Natural killer cell (primary cell): ENCODE measurements at regions of chr2 and their contacts with region 1.

Region 1: DNA sequence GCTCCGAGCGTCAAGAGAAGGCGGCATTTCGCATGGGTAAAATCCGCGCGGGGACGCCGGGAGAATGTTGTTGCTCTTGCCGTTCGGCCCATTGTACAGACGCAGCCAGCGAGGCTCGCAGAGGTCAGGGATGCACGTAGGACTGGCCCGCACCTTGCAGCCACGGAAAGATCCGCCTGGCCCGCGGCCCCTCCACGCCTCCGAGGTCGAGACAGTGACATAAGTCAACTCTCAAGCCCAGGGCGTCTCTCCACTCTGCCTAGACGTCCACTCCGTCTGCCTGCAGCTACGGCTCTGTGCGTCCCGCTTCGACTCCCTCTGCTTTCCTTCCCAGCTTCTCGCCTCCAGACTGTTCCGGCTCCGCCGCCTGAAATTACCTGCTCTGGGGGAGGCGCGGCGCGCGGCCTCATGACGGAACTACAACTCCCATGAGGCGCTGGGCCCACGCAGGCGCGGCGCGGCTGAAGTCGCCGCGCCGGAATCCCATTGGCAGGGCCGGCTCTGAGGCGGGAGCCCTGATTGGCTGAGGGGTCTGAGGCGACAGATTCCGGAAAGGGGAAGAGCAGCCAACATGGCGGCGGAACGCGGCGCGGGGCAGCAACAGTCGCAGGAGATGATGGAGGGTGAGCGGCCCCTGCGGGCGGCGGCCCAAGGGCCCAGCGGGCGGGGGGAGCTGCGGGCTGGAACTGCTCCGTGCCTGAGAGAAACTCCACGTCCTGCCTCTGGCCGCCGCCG is at the start of gene PPP1R7:
- DNase-seq: peak; percentile 89 to 97
- ATAC-seq: peak; percentile 83 to 89 (median 83)
- H3K4me3 ChIP-seq: peak within 1 kb of the TSS; percentile 78
- H3K4me3 Mint-ChIP-seq: peak within 1 kb of the TSS; percentile 95
- H3K27ac ChIP-seq: peak within 1 kb of the TSS; percentile 6
- H3K27ac Mint-ChIP-seq: peak within 1 kb of the TSS; percentile 89 to 90
- H3K4me1 ChIP-seq: peaks cover 14% of the 10 kb centered on the region
- H3K4me1 Mint-ChIP-seq: peaks cover 34 to 42% of the 10 kb centered on the region in 2 donors
- H3K27me3 ChIP-seq: no peaks in the 10 kb centered on the region
- H3K27me3 Mint-ChIP-seq: no peaks in the 10 kb centered on the region
- CTCF ChIP-seq: no peak
- total RNA-seq, gene PPP1R7: 57.8 to 66.3 (median 60.4) TPM

Region 2: DNA sequence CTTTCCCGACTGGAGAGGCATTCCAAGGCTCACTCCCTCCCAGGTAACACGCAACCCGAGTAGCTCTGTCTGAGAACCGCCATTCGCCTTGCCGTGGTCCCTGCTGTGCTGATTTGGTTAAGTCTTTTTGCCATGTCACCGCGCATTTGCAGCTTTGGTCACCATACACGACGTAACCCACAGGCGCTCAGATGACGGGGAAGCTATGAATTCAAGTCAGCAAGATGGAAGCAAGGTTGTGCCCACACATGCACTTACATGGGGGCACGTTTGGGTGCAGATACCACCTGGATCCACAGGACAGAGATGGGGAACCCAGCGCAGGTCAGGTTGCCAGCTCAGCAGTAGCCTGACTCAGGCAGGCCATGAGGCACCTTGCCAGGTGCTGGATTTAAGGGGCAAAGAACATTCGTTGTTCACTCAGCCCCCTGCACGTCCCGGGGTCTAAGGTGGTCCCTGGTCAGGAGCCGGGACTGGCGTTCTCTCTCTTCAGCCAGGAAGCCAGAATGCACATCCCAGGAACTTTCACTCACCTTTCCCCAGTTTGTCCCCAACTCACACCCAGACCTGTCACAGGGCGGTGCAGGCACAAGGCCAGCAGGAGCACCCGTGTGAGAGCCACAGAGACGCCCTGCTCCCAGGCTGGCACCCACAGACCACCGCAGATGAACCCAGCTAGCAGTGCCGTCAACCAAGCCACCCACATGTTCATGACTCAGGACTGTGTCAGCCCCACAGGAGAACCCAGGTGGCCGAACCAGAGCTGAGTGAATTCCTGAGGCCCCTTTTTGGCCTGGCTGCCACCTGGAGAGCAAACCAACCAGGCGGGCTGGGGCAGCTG is 131.8 kb before region 1 on chr2:
- intact Hi-C with region 1: no loop called
- DNase-seq: no peak
- ATAC-seq: no peak
- H3K4me3 ChIP-seq: no peak overlapping the region
- H3K4me3 Mint-ChIP-seq: no peak overlapping the region
- H3K27ac ChIP-seq: no peak overlapping the region
- H3K27ac Mint-ChIP-seq: no peak overlapping the region
- H3K4me1 ChIP-seq: no peaks in the 10 kb centered on the region
- H3K4me1 Mint-ChIP-seq: no peaks in the 10 kb centered on the region
- H3K27me3 ChIP-seq: no peaks in the 10 kb centered on the region
- H3K27me3 Mint-ChIP-seq: peaks cover 0 to 8% of the 10 kb centered on the region in 2 donors
- CTCF ChIP-seq: no peak

Region 3: DNA sequence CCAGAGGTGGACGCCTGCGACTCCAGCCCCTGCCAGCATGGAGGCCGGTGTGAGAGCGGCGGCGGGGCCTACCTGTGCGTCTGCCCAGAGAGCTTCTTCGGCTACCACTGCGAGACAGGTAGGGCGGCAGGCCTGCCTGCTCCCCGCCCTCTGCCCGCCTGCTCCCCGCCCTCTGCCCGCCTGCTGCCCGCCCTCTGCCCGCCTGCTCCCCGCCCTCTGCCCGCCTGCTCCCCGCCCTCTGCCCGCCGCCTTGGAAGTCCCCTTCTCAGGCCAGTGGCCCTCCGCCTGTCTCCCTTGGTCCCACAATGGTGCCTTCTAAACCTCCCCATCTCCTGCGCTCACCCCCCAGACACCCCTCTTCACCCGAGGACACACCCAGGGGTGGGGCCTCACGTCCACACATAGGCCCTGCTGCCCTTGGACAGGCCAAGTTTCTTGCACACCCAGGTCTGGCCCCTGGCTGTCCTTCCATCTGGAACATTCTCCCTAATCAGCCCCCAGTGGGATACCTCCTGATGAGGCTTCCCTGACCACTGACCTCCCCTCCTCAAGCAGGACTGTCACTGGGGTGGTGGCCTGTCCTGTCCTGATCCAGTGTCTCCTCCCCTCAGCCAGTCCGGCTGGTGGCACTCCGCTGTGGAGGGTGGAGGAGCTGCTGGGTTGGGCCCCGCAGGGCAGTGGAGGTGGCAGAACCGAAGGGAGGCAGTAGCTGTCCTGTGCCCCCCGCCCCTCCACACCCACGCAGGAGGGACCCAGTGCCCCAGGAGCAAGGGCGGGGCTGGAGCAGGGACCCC is 85.9 kb before region 1 on chr2:
- intact Hi-C with region 1: no loop called
- DNase-seq: peak in 1 of 2 donors; percentile 38
- ATAC-seq: peak in 2 of 3 donors; percentile 40 to 84
- H3K4me3 ChIP-seq: no peak overlapping the region
- H3K4me3 Mint-ChIP-seq: peak overlapping the region; percentile 66
- H3K27ac ChIP-seq: no peak overlapping the region
- H3K27ac Mint-ChIP-seq: no peak overlapping the region
- H3K4me1 ChIP-seq: peaks cover 6% of the 10 kb centered on the region
- H3K4me1 Mint-ChIP-seq: peaks cover 0 to 4% of the 10 kb centered on the region in 2 donors
- H3K27me3 ChIP-seq: no peaks in the 10 kb centered on the region
- H3K27me3 Mint-ChIP-seq: no peaks in the 10 kb centered on the region
- CTCF ChIP-seq: no peak

Region 4: DNA sequence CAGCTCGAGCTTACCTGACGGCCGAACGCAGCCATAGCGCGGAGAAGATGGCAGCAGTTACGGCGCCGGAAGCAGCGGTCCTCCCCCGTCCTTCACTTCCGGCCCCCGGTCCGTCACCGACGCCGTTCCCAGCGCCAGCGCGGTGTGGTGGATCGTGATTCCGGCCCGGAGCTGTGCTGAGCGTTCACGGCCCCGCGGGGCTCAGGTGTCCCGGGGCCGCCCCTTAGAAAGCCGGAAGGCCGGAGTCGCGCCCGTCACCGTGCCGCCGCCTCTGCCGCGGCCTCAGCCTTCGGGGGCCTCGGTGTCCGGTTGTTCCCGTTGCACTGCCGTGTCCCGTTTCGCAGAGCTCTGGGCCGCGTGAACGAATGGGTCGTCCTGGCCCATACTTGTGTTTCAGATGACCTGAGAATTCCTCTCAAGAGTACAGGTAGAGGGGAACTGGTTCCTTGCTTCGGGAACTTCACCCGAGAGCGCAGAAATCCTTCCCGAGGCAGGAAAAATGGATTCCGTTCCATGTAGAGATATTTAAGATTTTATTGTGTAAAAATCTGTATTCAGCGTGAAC is 47.8 kb before region 1 on chr2 and contains the start of gene MTERF4:
- intact Hi-C with region 1: loop called (anchors 1 kb)
- DNase-seq: peak; percentile 84 to 95
- ATAC-seq: peak; percentile 96 to 97 (median 96)
- H3K4me3 ChIP-seq: peak within 1 kb of the TSS; percentile 73
- H3K4me3 Mint-ChIP-seq: peak within 1 kb of the TSS; percentile 96
- H3K27ac ChIP-seq: peak within 1 kb of the TSS; percentile 85
- H3K27ac Mint-ChIP-seq: peak within 1 kb of the TSS; percentile 90 to 93
- H3K4me1 ChIP-seq: peaks cover 18% of the 10 kb centered on the region
- H3K4me1 Mint-ChIP-seq: peaks cover 17 to 42% of the 10 kb centered on the region in 2 donors
- H3K27me3 ChIP-seq: no peaks in the 10 kb centered on the region
- H3K27me3 Mint-ChIP-seq: no peaks in the 10 kb centered on the region
- CTCF ChIP-seq: no peak
- total RNA-seq, gene MTERF4: 38.9 to 45.5 (median 39.2) TPM

Region 5: DNA sequence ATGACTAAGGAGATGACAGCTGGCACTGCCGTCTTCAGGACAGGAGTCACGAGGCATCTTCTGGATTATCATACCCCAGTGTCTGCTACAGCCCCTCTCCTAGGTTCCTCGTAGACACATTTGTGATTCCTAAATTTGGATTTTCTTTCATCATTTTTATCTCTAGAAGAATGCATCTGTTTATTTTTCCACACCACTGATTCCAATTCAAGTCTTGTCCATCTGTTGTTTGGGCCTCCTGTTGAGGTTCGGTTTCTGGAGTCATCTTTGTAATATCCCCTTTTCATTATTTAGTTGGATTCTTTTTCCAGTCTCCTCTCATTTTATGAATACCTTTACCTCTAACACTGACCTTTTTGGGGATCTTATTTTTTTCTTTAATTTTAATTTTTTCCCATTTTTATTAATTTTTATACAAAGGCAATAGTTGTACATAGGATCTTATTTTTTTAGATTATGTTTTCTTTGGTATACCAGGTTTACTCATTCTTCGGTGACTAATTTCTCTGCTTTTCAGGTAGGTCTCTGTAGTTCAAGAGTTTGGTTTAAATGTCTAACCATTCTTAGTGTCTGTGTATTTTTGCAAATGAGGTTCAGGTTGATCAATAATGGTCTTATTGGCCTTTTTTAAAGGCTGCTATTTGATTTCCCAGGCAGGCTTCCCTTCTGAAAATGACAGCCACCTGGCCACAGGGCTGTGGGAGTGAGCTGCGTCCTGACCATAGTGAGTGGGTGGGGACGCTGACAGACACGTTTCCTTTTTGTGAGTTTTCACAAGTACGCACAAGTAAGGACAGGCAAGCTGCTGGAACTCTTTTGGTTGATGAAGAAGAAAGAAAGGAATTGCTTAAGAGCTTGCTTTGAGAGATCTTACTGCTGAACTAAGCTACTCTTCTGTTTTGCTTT is 240.5 kb after region 1 on chr2:
- intact Hi-C with region 1: no loop called
- DNase-seq: no peak
- ATAC-seq: no peak
- H3K4me3 ChIP-seq: no peak overlapping the region
- H3K4me3 Mint-ChIP-seq: no peak overlapping the region
- H3K27ac ChIP-seq: no peak overlapping the region
- H3K27ac Mint-ChIP-seq: no peak overlapping the region
- H3K4me1 ChIP-seq: no peaks in the 10 kb centered on the region
- H3K4me1 Mint-ChIP-seq: peaks cover 6% of the 10 kb centered on the region in 2 donors
- H3K27me3 ChIP-seq: no peaks in the 10 kb centered on the region
- H3K27me3 Mint-ChIP-seq: no peaks in the 10 kb centered on the region
- CTCF ChIP-seq: no peak